ENCODE measurements at regions of chr18 and their contacts with region 1.

Region 1: DNA sequence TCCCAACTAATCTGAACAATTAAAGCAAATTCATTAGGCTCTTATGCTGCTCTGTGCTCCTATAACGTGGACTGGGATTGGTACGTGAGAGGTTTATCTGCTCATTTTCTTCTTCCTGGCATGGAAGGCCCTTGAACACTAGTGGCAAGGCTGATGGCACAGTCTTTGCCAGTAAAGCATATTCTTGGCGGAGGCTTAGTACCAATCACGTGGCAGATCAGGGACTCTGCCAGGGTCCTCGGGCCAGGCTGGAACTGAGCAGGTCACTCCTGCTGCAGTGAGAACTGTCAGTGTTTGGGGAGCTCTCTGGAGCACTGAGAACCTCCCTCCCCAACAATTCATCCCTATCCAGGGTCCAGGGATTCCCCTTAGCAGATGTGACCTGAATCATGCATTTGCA is 3.7 kb upstream of the ALPK2 start:
- DNase-seq: no peak
- ATAC-seq: no peak
- H3K4me3 ChIP-seq: no peak overlapping the region
- H3K4me3 Mint-ChIP-seq: no peak overlapping the region
- H3K27ac ChIP-seq: no peak overlapping the region
- H3K27ac Mint-ChIP-seq: no peak overlapping the region
- H3K4me1 ChIP-seq: peaks cover 10% of the 10 kb centered on the region
- H3K4me1 Mint-ChIP-seq: peaks cover 47% of the 10 kb centered on the region
- H3K27me3 ChIP-seq: no peaks in the 10 kb centered on the region
- H3K27me3 Mint-ChIP-seq: no peaks in the 10 kb centered on the region
- CTCF ChIP-seq: no peak

Region 2: GRCh38 chr18:58578835-58579560 is 53.6 kb before region 1 on chr18:
- CTCF ChIA-PET with region 1: no interaction called
- POLR2A ChIA-PET with region 1: no interaction called
- intact Hi-C with region 1: loop called in 1 of 2 experiments (anchors 5 kb)
- DNase-seq: peak in 2 of 14 experiments; percentile 14 to 31
- ATAC-seq: no peak
- H3K4me3 ChIP-seq: no peak overlapping the region
- H3K4me3 Mint-ChIP-seq: no peak overlapping the region
- H3K27ac ChIP-seq: no peak overlapping the region
- H3K27ac Mint-ChIP-seq: no peak overlapping the region
- H3K4me1 ChIP-seq: peaks cover 8% of the 10 kb centered on the region
- H3K4me1 Mint-ChIP-seq: peaks cover 31% of the 10 kb centered on the region
- H3K27me3 ChIP-seq: no peaks in the 10 kb centered on the region
- H3K27me3 Mint-ChIP-seq: no peaks in the 10 kb centered on the region
- CTCF ChIP-seq: no peak

Measured in CD4-positive, alpha-beta T cell (primary cell).